PC-3 (cell line): ENCODE measurements at regions of chr9 and their contacts with region 1.

Region 1: GRCh38 chr9:130088051-130088450 is 34.3 kb downstream of the GPR107 start:
- DNase-seq: no peak
- ATAC-seq: no peak
- H3K4me3 ChIP-seq: no peak overlapping the region
- H3K27ac ChIP-seq: no peak overlapping the region
- H3K4me1 ChIP-seq: no peaks in the 10 kb centered on the region
- H3K27me3 ChIP-seq: no peaks in the 10 kb centered on the region
- CTCF ChIP-seq: no peak

Region 2: DNA sequence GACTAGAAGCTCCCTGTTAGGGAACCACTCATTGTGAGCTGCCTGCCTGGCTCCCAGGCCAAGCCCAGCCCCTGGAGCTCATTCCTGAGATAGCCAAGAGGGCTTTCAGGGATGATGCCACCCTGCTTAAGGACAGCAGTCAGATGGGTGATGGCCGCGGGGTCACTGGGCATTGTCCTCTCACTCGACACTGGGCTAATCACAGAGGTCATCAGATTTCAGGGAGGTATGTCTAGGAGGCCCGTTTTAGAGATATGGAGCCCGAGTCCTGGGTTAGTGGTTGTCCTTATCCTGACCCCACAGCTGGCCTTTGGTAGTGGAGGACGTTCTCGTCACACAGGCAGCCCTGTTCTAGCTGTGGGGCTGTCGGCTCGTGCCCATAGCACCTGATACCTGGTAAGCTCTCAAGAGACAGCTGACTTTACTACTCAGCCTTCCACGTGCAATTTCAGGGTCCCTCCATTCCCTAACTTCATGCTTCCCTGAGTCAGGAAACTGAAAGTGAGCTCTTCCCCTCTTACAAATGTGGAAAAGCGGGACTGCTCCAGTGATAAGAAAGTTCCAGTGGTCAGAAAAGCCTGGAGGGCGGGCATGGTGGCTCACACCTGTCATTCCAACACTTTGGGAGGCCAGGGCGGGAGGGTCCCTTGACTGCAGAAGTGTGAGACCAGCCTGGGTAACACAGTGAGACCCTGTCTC is 328.1 kb before region 1 on chr9:
- CTCF ChIA-PET with region 1: no interaction called
- POLR2A ChIA-PET with region 1: interaction called, 23 read pairs
- intact Hi-C with region 1: no loop called
- DNase-seq: no peak
- ATAC-seq: no peak
- H3K4me3 ChIP-seq: no peak overlapping the region
- H3K27ac ChIP-seq: no peak overlapping the region
- H3K4me1 ChIP-seq: peaks cover 20% of the 10 kb centered on the region
- H3K27me3 ChIP-seq: no peaks in the 10 kb centered on the region
- CTCF ChIP-seq: no peak

Region 3: DNA sequence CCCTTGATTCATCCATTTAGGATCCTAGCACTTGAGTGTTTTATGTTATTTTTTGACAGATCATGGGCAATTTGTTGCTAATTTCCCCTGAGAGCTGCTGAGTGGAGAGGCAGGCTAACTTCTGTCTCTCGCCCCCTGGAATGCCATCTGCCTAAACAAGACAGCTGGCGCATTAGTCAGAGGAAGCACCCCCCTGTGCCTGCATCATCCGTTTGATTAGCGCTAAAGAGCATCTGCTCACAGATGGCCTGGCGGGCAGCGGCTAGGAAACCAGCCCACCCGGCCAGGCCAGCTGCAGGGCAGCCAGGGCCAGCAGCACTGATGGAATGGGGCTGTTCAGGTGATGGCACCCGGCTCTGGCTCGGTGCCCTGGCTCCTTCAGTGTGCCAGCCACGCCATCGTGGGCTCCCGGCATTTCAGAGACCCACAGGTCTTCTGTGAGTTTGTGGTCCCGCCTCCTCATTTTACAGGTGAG is 333.8 kb after region 1 on chr9:
- CTCF ChIA-PET with region 1: no interaction called
- POLR2A ChIA-PET with region 1: no interaction called
- intact Hi-C with region 1: no loop called
- DNase-seq: no peak
- ATAC-seq: no peak
- H3K4me3 ChIP-seq: no peak overlapping the region
- H3K27ac ChIP-seq: no peak overlapping the region
- H3K4me1 ChIP-seq: peaks cover 7% of the 10 kb centered on the region
- H3K27me3 ChIP-seq: no peaks in the 10 kb centered on the region
- CTCF ChIP-seq: no peak